Activated T-helper 1 cell treated with anti-CD3 and anti-CD28 coated beads, Interleukin-12 subunit alpha, Interleukin-12 subunit beta, Interleukin-2, Interleukin-4 antibody, amounts not matched to agents 30 ng/mL and 10 ng/mL and 1 ng/mL, durations not matched to agents 14 hours and 24 hours and 36 hours (primary cell): ENCODE measurements at regions of chr11 and their contacts with region 1.

Region 1: DNA sequence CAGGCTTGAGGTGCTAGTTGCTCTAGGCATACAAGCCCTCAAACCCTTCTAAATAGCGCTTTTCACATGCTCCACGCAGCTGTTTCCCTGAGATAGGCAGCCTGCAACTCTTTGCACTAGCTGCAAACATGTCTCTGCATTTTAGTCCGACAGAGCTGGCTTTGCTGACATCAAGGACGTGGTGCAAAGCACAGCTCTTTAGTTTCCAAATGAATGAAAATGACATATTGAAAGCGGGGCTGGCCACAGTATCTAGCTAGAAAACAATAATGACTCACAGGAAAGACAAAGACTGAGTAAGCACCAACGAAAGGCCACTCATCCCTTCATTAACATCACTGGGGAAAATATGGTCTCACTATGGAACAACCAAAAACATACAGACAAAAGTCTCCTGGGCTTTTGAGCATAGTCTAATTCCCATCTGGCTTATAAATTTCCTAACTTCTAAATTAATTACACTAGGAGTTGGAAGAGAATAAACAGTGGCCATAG is 15.3 kb upstream of the ZC3H12C start:
- DNase-seq: peak; percentile 47
- H3K4me3 Mint-ChIP-seq: peak overlapping the region; percentile 28
- H3K27ac Mint-ChIP-seq: peak overlapping the region; percentile 75
- H3K4me1 Mint-ChIP-seq: peaks cover 38% of the 10 kb centered on the region
- H3K27me3 Mint-ChIP-seq: peaks cover 8% of the 10 kb centered on the region

Region 2: DNA sequence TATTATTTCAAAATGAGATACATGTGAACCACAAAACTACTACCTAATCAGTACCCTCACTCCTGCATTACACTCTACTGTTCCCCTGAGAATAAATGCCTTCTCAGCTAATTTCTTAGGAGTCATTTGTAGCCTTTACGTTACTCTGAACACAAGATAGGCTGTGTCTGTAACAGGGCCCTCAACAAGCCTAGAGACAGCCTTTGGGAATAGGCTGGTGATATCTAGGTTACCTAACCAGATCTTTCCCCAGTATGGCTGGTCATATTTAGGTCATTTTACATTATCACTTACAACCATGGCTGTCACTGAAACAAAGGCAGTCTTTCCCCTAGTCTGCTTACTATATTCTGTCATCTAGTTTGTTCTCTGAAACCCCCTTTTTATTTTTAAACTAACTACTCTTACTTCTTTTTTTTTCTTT is 1840.8 kb before region 1 on chr11:
- intact Hi-C with region 1: loop called (anchors 5 kb)
- DNase-seq: no peak
- H3K4me3 Mint-ChIP-seq: peak overlapping the region; percentile 68
- H3K27ac Mint-ChIP-seq: peak overlapping the region; percentile 78
- H3K4me1 Mint-ChIP-seq: peaks cover 60% of the 10 kb centered on the region
- H3K27me3 Mint-ChIP-seq: peaks cover 4% of the 10 kb centered on the region

Region 3: DNA sequence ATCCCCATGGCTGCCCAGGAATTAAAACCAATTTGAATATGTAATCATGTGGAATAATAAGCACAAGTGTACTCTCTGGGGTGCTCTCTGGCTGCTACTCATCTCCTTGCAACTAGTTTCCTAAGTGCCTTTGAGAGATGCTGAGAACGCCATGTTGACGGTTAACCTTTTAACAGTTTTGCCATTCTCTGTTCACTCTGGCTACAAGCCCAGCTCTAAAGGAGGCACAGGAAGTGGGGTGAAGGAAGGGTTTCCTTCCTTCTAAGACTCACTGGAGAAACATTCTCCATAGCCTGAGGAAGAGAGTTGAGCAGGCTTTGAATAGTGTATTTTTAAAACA is 106.7 kb before region 1 on chr11:
- intact Hi-C with region 1: loop called (anchors 1 kb)
- DNase-seq: no peak
- H3K4me3 Mint-ChIP-seq: peak overlapping the region; percentile 57
- H3K27ac Mint-ChIP-seq: peak overlapping the region; percentile 82
- H3K4me1 Mint-ChIP-seq: peaks cover 45% of the 10 kb centered on the region
- H3K27me3 Mint-ChIP-seq: peaks cover 7% of the 10 kb centered on the region

Region 4: DNA sequence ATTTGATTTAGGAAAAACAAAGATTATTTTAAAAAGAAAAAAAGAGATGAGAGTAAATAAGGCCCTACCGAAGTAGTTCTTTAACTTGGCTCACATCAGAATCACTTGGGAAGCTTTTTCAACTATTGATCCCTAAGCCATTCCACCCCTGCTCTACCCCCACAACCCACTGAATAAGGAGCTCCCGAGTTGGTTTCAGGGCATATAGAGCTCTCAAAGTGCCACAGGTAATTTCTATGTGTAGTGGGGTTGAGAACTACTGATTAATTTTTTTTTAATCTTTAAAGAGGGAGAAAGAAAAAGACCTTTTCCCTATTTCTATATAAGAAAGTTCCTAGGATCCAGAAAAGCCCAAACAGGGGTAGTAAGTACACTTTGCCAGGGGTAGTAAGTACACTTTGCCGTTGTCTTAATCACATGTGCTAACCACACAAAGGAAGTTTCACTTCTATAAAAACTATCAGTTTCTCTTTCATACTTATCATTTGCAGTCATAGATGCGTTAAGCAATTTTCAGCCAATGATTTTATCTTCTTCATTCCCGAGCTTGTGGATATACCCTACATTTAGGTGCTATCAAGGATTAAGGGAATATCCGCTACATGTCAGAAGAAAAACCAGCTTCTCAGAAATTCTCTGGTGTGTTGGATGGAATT is 93.1 kb before region 1 on chr11:
- intact Hi-C with region 1: loop called (anchors 1 kb)
- DNase-seq: no peak
- H3K4me3 Mint-ChIP-seq: peak overlapping the region; percentile 23
- H3K27ac Mint-ChIP-seq: no peak overlapping the region
- H3K4me1 Mint-ChIP-seq: peaks cover 19% of the 10 kb centered on the region
- H3K27me3 Mint-ChIP-seq: peaks cover 11% of the 10 kb centered on the region

Region 5: GRCh38 chr11:110092515-110093404 is 14.9 kb after region 1 on chr11 and contains the start of gene ZC3H12C:
- intact Hi-C with region 1: loop called (anchors 1 kb)
- DNase-seq: peak; percentile 47
- H3K4me3 Mint-ChIP-seq: peak within 1 kb of the TSS; percentile 87
- H3K27ac Mint-ChIP-seq: peak within 1 kb of the TSS; percentile 93
- H3K4me1 Mint-ChIP-seq: peaks cover 16% of the 10 kb centered on the region
- H3K27me3 Mint-ChIP-seq: peaks cover 56% of the 10 kb centered on the region
- total RNA-seq, gene ZC3H12C: 5.7 and 6.2 TPM in 2 replicates

Region 6: GRCh38 chr11:110190885-110191284 is 113.0 kb after region 1 on chr11:
- intact Hi-C with region 1: loop called (anchors 5 kb)
- DNase-seq: no peak
- H3K4me3 Mint-ChIP-seq: no peak overlapping the region
- H3K27ac Mint-ChIP-seq: no peak overlapping the region
- H3K4me1 Mint-ChIP-seq: peaks cover 15% of the 10 kb centered on the region
- H3K27me3 Mint-ChIP-seq: peaks cover 38% of the 10 kb centered on the region

Region 7: DNA sequence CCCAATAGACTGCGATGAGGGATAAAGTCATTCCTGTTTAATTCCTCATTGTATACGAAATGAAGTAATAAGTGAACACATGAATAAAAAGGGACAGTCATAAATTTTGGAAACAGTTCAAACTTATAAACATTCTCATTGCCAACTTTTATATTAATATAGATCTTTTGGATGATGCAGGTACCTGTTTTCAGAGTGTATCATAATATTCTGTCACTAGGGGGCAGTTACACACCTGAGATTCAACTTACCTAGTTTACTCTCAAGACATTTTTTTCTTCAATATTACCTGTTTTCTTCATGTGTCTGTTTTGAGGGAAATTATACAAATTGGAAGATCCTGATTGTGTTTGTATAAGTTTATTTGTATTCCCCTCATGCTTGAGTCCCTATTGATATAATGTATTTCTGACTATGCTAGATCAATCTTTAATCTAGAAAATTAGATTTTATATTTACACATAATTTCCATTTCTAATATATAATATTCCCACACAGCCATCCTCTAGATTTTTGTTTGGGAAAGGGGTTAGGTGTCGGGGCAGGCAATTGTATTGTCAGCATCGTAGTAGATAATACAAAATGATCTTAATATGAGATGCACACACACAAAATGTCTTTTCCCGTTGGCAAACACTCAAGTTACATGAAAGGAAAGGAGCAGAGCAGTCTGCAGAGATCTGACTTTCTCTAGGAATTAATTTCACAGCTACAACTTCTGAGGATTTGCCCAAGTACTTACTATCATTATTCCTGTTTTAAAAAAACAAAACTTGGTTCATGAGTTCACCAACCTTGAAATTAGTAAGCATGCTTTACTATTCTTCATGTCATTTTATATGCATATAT is 370.2 kb after region 1 on chr11:
- intact Hi-C with region 1: no loop called
- DNase-seq: no peak
- H3K4me3 Mint-ChIP-seq: no peak overlapping the region
- H3K27ac Mint-ChIP-seq: no peak overlapping the region
- H3K4me1 Mint-ChIP-seq: peaks cover 26% of the 10 kb centered on the region
- H3K27me3 Mint-ChIP-seq: no peaks in the 10 kb centered on the region

Region 8: DNA sequence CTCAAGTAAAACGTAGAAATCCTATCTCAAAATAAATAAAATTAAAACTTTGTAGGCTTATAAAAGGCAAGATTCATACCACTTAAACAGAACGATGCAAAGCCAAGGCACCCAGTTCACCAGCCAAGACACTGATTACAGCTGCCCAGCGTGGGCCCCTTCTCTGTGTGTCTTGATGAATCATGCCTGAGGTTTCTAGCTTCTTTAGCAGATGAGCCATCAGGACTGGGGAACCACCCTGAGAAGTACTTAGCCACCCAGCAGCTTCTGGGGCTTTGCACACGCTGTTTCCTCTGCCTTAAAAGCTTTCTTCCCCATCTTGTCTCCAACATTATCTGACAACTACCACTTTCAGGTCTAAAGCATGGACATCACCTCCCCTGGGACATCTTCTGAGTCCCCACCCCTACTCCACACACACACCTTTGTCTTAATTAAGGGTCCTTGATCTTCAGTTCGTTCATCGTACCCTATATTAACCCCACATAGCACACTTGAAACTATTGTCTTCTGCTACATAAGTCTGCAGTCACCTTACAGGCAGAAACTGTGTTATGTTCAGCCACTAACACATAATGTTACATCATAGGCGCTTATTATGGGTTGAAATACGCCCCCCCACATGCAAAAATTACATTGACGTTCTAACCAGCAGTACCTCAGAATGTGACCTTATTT is 1453.9 kb after region 1 on chr11:
- intact Hi-C with region 1: loop called (anchors 5 kb)
- DNase-seq: peak; percentile 52
- H3K4me3 Mint-ChIP-seq: no peak overlapping the region
- H3K27ac Mint-ChIP-seq: peak overlapping the region; percentile 56
- H3K4me1 Mint-ChIP-seq: peaks cover 31% of the 10 kb centered on the region
- H3K27me3 Mint-ChIP-seq: peaks cover 14% of the 10 kb centered on the region